ENCODE measurements at regions of chr3 and their contacts with region 1.

Region 1: DNA sequence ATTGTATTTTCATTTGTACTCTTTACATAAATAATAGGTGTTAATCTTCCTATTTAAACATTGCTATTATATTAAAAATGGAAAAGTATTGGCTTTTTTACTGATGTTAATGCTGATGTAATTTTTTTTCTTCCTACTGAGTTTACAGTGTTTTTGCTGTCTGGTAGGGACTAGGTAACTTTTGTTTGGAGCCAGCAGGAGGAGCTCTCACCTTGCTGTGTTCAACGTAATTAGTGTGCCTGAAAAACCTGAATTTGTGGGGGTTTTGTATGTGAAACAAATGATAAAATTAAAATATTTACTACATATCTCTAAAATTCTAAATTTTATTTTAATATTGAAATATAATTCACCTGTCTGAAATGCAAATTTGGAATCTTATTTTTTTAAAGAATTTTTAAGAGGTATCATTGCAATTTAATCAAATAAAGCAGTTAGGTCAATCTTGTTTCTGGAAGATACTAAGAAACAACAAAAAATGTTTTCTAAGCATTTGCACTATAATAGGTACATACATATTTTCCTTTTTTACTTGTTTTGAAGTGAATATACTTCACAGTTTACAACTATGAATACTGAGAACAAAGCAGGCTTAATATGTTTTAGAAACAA is 48.8 kb downstream of the EPHA6 start:
- DNase-seq: no peak
- H3K4me3 Mint-ChIP-seq: no peak overlapping the region
- H3K27ac Mint-ChIP-seq: no peak overlapping the region
- H3K4me1 Mint-ChIP-seq: no peaks in the 10 kb centered on the region
- H3K27me3 Mint-ChIP-seq: no peaks in the 10 kb centered on the region

Region 2: GRCh38 chr3:96059301-96059700 is 803.9 kb before region 1 on chr3:
- intact Hi-C with region 1: no loop called
- DNase-seq: no peak
- H3K4me3 Mint-ChIP-seq: no peak overlapping the region
- H3K27ac Mint-ChIP-seq: no peak overlapping the region
- H3K4me1 Mint-ChIP-seq: no peaks in the 10 kb centered on the region
- H3K27me3 Mint-ChIP-seq: no peaks in the 10 kb centered on the region

Region 3: GRCh38 chr3:97658668-97659285 is 795.5 kb after region 1 on chr3:
- intact Hi-C with region 1: loop called (anchors 2 kb)
- DNase-seq: no peak
- H3K4me3 Mint-ChIP-seq: no peak overlapping the region
- H3K27ac Mint-ChIP-seq: no peak overlapping the region
- H3K4me1 Mint-ChIP-seq: no peaks in the 10 kb centered on the region
- H3K27me3 Mint-ChIP-seq: no peaks in the 10 kb centered on the region

Region 4: DNA sequence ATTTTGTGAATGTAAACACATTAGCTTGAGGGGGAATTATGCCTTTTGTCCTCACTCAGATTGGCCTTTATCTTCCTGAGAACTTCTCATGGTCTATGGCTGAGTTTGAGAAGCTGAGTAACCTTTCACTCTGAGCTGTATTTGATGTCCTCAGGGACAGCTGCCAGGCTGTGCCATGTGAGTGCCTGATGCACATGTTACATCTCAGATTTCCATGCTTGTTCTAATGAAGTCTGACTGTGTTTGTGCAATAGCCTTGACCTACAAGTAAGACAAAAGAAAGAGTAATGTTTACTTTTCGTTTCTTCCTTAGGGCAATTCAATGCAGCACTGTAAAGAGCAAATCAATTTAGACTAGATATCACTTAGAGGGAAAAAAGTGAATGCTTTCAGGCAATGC is 857.2 kb after region 1 on chr3:
- intact Hi-C with region 1: loop called (anchors 5 kb)
- DNase-seq: no peak
- H3K4me3 Mint-ChIP-seq: no peak overlapping the region
- H3K27ac Mint-ChIP-seq: no peak overlapping the region
- H3K4me1 Mint-ChIP-seq: no peaks in the 10 kb centered on the region
- H3K27me3 Mint-ChIP-seq: peaks cover 3% of the 10 kb centered on the region